GM23248 (cell line): ENCODE measurements at regions of chr4 and their contacts with region 1.

Region 1: GRCh38 chr4:173413036-173413435 is 14.1 kb upstream of the SCRG1 start:
- DNase-seq: peak; percentile 22
- H3K4me3 ChIP-seq: no peak overlapping the region
- H3K27ac ChIP-seq: no peak overlapping the region
- H3K4me1 ChIP-seq: no peaks in the 10 kb centered on the region
- H3K27me3 ChIP-seq: no peaks in the 10 kb centered on the region

Region 2: DNA sequence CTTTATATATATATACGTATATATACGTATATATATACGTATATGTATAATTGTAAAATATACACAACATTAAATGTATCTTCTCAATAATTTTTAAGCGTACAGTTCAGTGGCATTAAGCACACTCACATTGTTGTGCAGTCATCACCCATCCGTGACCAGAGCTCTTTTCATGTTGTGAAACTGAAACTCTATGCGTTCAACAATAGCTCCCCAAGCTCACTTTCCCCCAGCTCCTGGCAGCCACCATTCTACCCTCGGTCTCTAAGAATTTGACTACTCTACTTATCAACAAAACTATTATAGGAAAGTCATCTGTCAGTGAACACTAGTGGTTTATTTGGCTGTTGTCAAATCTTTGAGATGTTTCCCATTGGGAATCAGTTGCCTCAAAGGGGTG is 866.3 kb before region 1 on chr4:
- in situ Hi-C with region 1: no loop called
- DNase-seq: no peak
- H3K4me3 ChIP-seq: no peak overlapping the region
- H3K27ac ChIP-seq: no peak overlapping the region
- H3K4me1 ChIP-seq: no peaks in the 10 kb centered on the region
- H3K27me3 ChIP-seq: no peaks in the 10 kb centered on the region

Region 3: GRCh38 chr4:173293663-173294062 is 119.4 kb before region 1 on chr4:
- in situ Hi-C with region 1: no loop called
- DNase-seq: no peak
- H3K4me3 ChIP-seq: no peak overlapping the region
- H3K27ac ChIP-seq: no peak overlapping the region
- H3K4me1 ChIP-seq: no peaks in the 10 kb centered on the region
- H3K27me3 ChIP-seq: no peaks in the 10 kb centered on the region

Region 4: GRCh38 chr4:173311368-173311767 is 101.7 kb before region 1 on chr4:
- in situ Hi-C with region 1: loop called (anchors 5 kb)
- DNase-seq: no peak
- H3K4me3 ChIP-seq: no peak overlapping the region
- H3K27ac ChIP-seq: no peak overlapping the region
- H3K4me1 ChIP-seq: no peaks in the 10 kb centered on the region
- H3K27me3 ChIP-seq: no peaks in the 10 kb centered on the region

Region 5: GRCh38 chr4:173642509-173642908 is 229.5 kb after region 1 on chr4:
- in situ Hi-C with region 1: no loop called
- DNase-seq: no peak
- H3K4me3 ChIP-seq: no peak overlapping the region
- H3K27ac ChIP-seq: no peak overlapping the region
- H3K4me1 ChIP-seq: no peaks in the 10 kb centered on the region
- H3K27me3 ChIP-seq: no peaks in the 10 kb centered on the region